ENCODE measurements at regions of chr2 and their contacts with region 1.

Region 1: DNA sequence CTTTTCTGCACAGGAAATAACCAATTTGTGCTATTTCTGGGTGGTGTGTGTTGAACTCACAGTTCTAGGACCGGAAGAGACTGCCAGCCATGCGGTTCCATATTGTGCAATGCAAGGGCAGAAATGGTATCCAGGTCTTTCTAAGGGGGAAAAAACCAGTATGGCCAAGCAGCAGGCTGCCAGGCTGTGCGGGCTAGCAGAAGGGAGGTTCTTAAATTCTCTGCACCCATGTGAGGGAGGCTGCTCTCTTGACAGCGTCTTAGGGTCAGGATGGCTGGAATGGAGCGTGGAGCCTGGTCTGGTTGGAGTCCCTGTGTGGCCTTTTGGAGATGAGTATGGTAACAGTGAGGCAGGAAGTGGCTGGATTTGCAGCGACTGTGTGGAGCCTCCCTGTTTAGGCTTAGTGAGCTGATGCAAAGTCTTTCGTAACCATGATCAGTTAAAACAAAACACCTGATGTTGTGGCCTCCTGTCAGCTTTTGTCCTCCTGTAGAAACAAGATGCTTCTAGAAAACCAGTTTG is 52.6 kb downstream of the NCK2 start:
- DNase-seq: peak; percentile 72
- ATAC-seq: peak; percentile 48
- H3K4me3 Mint-ChIP-seq: peak overlapping the region; percentile 88
- H3K27ac Mint-ChIP-seq: peak overlapping the region; percentile 99
- H3K4me1 Mint-ChIP-seq: peaks cover 84% of the 10 kb centered on the region
- H3K27me3 Mint-ChIP-seq: no peaks in the 10 kb centered on the region

Region 2: DNA sequence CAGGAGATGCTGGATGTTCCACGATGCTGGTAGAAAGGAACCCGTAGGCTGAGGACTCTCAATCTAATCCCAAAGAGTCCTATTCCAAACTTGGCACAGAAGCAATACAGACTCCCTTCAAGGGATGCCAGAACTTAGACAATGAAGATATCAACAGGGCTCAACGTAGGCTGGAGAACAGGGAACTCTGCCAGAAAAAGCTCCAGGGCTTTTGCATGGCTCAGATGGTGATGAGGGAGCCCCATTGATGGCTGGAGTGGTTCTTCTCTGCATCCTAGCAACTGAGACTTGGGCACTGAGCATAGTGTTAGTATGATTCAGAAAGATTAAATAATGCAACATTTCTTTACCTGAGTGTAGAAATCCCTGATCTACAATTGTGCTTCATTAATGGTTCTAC is 169.8 kb before region 1 on chr2:
- POLR2A ChIA-PET with region 1: no interaction called
- DNase-seq: no peak
- ATAC-seq: no peak
- H3K4me3 Mint-ChIP-seq: no peak overlapping the region
- H3K27ac Mint-ChIP-seq: no peak overlapping the region
- H3K4me1 Mint-ChIP-seq: peaks cover 2% of the 10 kb centered on the region
- H3K27me3 Mint-ChIP-seq: peaks cover 22% of the 10 kb centered on the region

Region 3: GRCh38 chr2:105857076-105857740 is 59.8 kb after region 1 on chr2:
- POLR2A ChIA-PET with region 1: interaction called, 10 read pairs
- DNase-seq: peak; percentile 52
- ATAC-seq: peak; percentile 47
- H3K4me3 Mint-ChIP-seq: peak overlapping the region; percentile 65
- H3K27ac Mint-ChIP-seq: peak overlapping the region; percentile 96
- H3K4me1 Mint-ChIP-seq: peaks cover 64% of the 10 kb centered on the region
- H3K27me3 Mint-ChIP-seq: no peaks in the 10 kb centered on the region

Region 4: DNA sequence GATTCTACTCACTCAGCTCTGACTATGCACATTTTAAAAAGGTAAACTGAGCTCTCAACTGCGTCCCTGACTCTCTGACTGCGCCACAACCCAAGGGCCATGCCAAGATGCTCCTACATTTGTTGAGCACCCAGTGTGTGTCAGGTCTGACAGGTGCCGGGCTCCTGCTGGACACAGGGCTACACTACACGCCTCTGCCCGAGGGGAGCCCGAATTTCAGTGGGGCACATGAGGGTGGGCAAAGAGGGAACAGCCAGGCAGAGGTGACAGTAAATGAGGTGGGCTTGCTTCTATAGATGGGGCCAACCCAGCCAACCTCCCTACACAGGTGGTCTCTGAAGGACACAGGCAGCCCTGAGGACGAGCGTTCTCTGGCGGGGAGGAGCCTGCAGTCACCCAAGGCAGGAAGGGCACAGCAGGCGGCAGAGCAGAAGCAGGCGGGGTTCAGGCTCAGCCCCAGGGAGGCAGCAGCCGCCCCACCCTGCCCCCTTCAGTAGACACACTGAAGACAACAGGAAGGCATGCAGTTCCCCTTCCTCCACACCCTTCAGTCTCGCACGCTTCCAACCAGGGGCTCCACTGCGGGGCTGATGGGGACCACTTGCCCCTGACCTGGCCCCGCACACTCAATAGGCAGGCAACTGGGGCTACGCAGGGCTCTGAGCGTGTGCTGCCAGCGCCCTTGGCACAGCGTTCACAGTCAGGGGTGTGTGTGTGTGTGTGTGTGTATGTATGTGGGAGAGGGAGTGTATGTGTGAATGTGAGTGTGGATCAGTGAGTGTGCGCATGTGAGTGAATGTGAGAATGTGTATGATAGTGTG is 298.3 kb after region 1 on chr2:
- POLR2A ChIA-PET with region 1: interaction called, 13 read pairs
- DNase-seq: peak; percentile 79
- ATAC-seq: peak; percentile 89
- H3K4me3 Mint-ChIP-seq: peak overlapping the region; percentile 80
- H3K27ac Mint-ChIP-seq: peak overlapping the region; percentile 92
- H3K4me1 Mint-ChIP-seq: peaks cover 44% of the 10 kb centered on the region
- H3K27me3 Mint-ChIP-seq: no peaks in the 10 kb centered on the region